Right cardiac atrium (tissue), 5 donors: ENCODE measurements at regions of chr3 and their contacts with region 1.

Region 1: GRCh38 chr3:32283304-32283703 is 44.8 kb downstream of the CMTM8 start:
- DNase-seq: peak; percentile 64 to 81 (median 78)
- ATAC-seq: peak; percentile 74
- H3K4me3 ChIP-seq: no peak overlapping the region
- H3K27ac ChIP-seq: peak overlapping the region; percentile 39
- H3K4me1 ChIP-seq: peaks cover 2% of the 10 kb centered on the region
- H3K27me3 ChIP-seq: no peaks in the 10 kb centered on the region

Region 2: GRCh38 chr3:32238453-32239306 is 44.6 kb before region 1 on chr3 and contains the start of gene CMTM8:
- intact Hi-C with region 1: loop called in 1 of 4 experiments (anchors 5 kb)
- DNase-seq: peak; percentile 41 to 80 (median 76)
- ATAC-seq: peak; percentile 91 to 92
- H3K4me3 ChIP-seq: peak within 1 kb of the TSS; percentile 95
- H3K27ac ChIP-seq: peak within 1 kb of the TSS; percentile 62
- H3K4me1 ChIP-seq: peaks cover 8% of the 10 kb centered on the region
- H3K27me3 ChIP-seq: no peaks in the 10 kb centered on the region
- total RNA-seq, gene CMTM8: 4.6 to 6.2 (median 5.2) TPM